GM10248 (cell line): ENCODE measurements at regions of chr17 and their contacts with region 1.

Region 1: GRCh38 chr17:5191541-5192417 is at the start of gene ZNF594:
- DNase-seq: peak; percentile 99
- CTCF ChIP-seq: peak; percentile 85

Region 2: DNA sequence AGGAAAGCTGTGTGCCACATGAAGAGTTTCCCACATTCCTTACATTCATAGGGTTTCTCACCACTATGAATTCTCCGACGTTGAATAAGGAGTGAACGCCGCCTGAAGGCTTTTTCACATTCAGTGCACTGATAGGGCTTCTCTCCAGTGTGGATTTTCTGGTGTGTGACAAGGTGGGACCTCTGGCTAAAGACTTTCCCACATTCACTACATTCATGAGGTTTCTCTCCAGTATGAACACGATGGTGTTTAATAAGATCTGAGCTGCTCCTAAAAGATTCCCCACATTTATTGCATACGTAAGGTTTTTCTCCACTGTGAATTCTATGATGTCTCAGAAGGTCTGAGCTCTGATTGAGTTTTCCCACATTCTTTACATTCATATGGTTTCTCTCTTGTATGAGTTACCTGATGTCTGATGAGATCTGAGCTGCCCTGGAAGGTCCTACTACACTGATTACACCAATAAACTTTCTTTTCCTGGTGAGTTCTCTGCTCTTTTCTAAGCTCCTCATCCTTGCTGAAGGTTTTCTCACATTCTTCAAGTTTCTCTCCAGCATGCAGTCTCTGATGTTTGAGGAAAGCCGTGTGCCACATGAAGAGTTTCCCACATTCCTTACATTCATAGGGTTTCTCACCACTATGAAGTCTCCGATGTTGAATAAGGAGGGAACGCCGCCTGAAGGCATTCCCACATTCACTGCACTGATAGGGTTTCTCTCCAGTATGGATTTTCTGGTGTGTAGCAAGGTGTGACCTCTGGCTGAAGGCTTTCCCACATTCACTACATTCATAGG is 10.1 kb before region 1 on chr17:
- CTCF ChIA-PET with region 1: interaction called, 10 read pairs
- POLR2A ChIA-PET with region 1: no interaction called
- DNase-seq: no peak
- CTCF ChIP-seq: no peak

Region 3: DNA sequence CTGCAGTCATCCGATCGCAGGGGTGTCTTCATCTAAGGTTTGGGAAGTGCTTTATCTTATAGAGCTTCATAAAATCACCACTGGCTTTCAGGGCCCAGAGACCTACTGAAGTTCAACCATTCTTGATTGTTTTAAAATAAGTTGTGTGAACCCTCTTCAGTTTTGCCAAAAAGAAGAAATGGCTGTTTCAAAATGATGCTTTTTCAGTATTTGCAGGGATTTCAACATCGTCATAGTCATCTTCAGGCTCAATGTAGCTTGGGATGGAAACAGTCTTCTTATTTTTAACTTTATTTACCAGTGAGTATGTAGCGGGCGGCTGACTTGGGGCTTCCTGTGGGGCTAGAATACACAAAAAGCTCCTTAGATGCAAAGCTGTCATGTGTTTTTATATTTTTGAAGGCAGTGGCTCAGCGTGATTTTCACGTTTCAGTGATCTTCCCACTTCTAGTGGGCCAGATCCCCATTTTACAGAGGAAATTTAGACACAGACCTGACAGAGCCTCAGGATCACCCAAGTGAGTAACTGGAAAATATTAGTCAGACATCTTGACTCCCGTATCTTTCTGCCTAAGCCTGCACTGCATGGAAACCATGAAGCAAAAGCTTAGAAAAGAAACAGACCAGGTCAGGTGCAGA is 19.0 kb after region 1 on chr17:
- CTCF ChIA-PET with region 1: interaction called, 46 read pairs
- POLR2A ChIA-PET with region 1: no interaction called
- DNase-seq: peak; percentile 35
- CTCF ChIP-seq: no peak